ENCODE measurements at regions of chr6 and their contacts with region 1.

Region 1: GRCh38 chr6:2353412-2354137 is 108.2 kb upstream of the GMDS start:
- DNase-seq: peak; percentile 57 to 58
- H3K4me3 ChIP-seq: no peak overlapping the region
- H3K27ac ChIP-seq: no peak overlapping the region
- H3K4me1 ChIP-seq: no peaks in the 10 kb centered on the region
- H3K27me3 ChIP-seq: no peaks in the 10 kb centered on the region
- CTCF ChIP-seq: peak; percentile 58 to 84 (median 74)
- POLR2A ChIP-seq: no peak

Region 2: DNA sequence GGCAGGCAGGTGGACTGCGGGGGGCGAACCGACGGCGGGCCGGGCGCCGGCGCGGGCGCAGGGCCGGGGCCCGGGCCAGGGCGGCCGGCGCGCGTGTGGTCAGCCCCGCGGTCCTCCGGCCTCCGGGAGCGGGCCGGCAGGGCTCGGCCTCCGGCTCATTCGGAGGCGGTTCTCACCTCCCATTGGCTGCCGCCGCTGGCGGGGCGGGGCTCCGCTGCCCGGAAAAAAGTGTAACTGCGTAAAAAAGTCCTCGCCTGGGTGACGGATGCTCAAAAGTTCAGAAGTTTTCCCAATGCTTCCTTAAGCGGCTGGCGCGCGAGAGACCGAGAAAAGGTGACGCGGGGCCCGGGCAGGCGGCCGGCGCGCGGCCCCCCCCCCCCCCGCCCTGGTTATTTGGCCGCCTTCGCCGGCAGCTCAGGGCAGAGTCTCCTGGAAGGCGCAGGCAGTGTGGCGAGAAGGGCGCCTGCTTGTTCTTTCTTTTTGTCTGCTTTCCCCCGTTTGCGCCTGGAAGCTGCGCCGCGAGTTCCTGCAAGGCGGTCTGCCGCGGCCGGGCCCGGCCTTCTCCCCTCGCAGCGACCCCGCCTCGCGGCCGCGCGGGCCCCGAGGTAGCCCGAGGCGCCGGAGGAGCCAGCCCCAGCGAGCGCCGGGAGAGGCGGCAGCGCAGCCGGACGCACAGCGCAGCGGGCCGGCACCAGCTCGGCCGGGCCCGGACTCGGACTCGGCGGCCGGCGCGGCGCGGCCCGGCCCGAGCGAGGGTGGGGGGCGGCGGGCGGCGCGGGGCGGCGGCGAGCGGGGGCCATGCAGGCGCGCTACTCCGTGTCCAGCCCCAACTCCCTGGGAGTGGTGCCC is 743.7 kb before region 1 on chr6 and contains the start of gene FOXC1:
- intact Hi-C with region 1: loop called (anchors 5 kb)
- DNase-seq: peak; percentile 81 to 87
- H3K4me3 ChIP-seq: peak within 1 kb of the TSS; percentile 22 to 67
- H3K27ac ChIP-seq: peak within 1 kb of the TSS; percentile 83 to 89
- H3K4me1 ChIP-seq: peaks cover 0 to 15% of the 10 kb centered on the region in 2 donors
- H3K27me3 ChIP-seq: peaks cover 44 to 63% of the 10 kb centered on the region in 2 donors
- CTCF ChIP-seq: no peak
- POLR2A ChIP-seq: peak; percentile 47 to 85
- total RNA-seq, gene FOXC1: 1.8 to 15.2 (median 5.1) TPM

Region 3: DNA sequence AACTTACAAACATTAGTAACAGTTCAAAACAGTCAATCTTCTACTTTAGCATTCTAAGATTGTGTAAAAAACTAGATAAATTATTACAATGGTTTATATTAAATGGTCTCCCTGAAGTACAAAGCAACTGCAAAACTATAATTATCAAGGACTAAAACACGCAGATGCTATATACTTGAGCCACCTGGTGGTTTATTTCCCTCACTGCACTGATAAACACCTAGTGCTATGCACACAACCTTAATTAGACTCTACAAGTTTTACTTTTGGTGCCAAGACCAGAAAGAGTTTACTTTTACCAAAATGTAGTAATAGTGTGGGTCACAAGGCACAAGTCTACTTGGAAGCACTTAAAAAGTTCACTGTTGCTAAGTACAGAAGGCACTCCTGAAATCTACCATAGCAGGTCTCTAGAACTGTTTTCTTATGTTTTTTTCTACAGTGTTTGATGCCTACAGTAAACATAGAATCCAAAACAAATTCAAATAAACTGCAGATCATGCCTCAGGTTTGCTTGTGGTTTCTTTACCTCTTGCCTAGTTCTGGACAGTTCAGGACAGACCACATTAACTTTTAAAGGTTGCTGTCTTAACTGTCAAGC is 157.4 kb before region 1 on chr6:
- intact Hi-C with region 1: loop called (anchors 10 kb)
- DNase-seq: peak in 1 of 2 donors; percentile 37
- H3K4me3 ChIP-seq: no peak overlapping the region
- H3K27ac ChIP-seq: no peak overlapping the region
- H3K4me1 ChIP-seq: no peaks in the 10 kb centered on the region
- H3K27me3 ChIP-seq: no peaks in the 10 kb centered on the region
- CTCF ChIP-seq: peak; percentile 61 to 79 (median 66)
- POLR2A ChIP-seq: no peak

Region 4: GRCh38 chr6:2524090-2524489 is 170.5 kb after region 1 on chr6:
- intact Hi-C with region 1: no loop called
- DNase-seq: no peak
- H3K4me3 ChIP-seq: no peak overlapping the region
- H3K27ac ChIP-seq: no peak overlapping the region
- H3K4me1 ChIP-seq: no peaks in the 10 kb centered on the region
- H3K27me3 ChIP-seq: no peaks in the 10 kb centered on the region
- CTCF ChIP-seq: no peak
- POLR2A ChIP-seq: no peak

Measured in uterus (tissue), 4 donors.